CD8-positive, alpha-beta T cell (primary cell): ENCODE measurements at regions of chr18 and their contacts with region 1.

Region 1: GRCh38 chr18:46250084-46250811 is 146.1 kb downstream of the HAUS1 start:
- DNase-seq: peak in 7 of 9 experiments; percentile 16 to 93 (median 51)
- ATAC-seq: peak; percentile 93
- H3K4me3 ChIP-seq: peak overlapping the region; percentile 30 to 44
- H3K4me3 Mint-ChIP-seq: peak overlapping the region; percentile 86
- H3K27ac ChIP-seq: peak overlapping the region; percentile 25 to 99
- H3K27ac Mint-ChIP-seq: peak overlapping the region; percentile 98
- H3K4me1 ChIP-seq: peaks cover 44% of the 10 kb centered on the region
- H3K4me1 Mint-ChIP-seq: peaks cover 50% of the 10 kb centered on the region
- H3K27me3 ChIP-seq: no peaks in the 10 kb centered on the region
- H3K27me3 Mint-ChIP-seq: no peaks in the 10 kb centered on the region
- CTCF ChIP-seq: no peak

Region 2: GRCh38 chr18:46097801-46098615 is 152.2 kb before region 1 on chr18 and contains the start of gene ATP5F1A:
- CTCF ChIA-PET with region 1: no interaction called
- POLR2A ChIA-PET with region 1: no interaction called
- intact Hi-C with region 1: loop called in 1 of 2 experiments (anchors 5 kb)
- DNase-seq: peak; percentile 67 to 93 (median 85)
- ATAC-seq: peak; percentile 83
- H3K4me3 ChIP-seq: peak within 1 kb of the TSS; percentile 60 to 95
- H3K4me3 Mint-ChIP-seq: peak within 1 kb of the TSS; percentile 98
- H3K27ac ChIP-seq: peak within 1 kb of the TSS; percentile 74 to 82
- H3K27ac Mint-ChIP-seq: peak within 1 kb of the TSS; percentile 98
- H3K4me1 ChIP-seq: peaks cover 33% of the 10 kb centered on the region
- H3K4me1 Mint-ChIP-seq: peaks cover 33% of the 10 kb centered on the region
- H3K27me3 ChIP-seq: no peaks in the 10 kb centered on the region
- H3K27me3 Mint-ChIP-seq: no peaks in the 10 kb centered on the region
- CTCF ChIP-seq: no peak
- total RNA-seq, gene ATP5F1A: 208 to 212 TPM

Region 3: GRCh38 chr18:46213295-46213694 is 37.0 kb before region 1 on chr18:
- CTCF ChIA-PET with region 1: interaction called, 3 read pairs
- POLR2A ChIA-PET with region 1: no interaction called
- intact Hi-C with region 1: loop called in 1 of 2 experiments (anchors 5 kb)
- DNase-seq: peak in 2 of 9 experiments; percentile 44 to 62
- ATAC-seq: peak; percentile 63
- H3K4me3 ChIP-seq: no peak overlapping the region
- H3K4me3 Mint-ChIP-seq: peak overlapping the region; percentile 30
- H3K27ac ChIP-seq: no peak overlapping the region
- H3K27ac Mint-ChIP-seq: no peak overlapping the region
- H3K4me1 ChIP-seq: peaks cover 53% of the 10 kb centered on the region
- H3K4me1 Mint-ChIP-seq: peaks cover 82% of the 10 kb centered on the region
- H3K27me3 ChIP-seq: no peaks in the 10 kb centered on the region
- H3K27me3 Mint-ChIP-seq: no peaks in the 10 kb centered on the region
- CTCF ChIP-seq: peak; percentile 85